WTC11 (cell line): ENCODE measurements at regions of chr19 and their contacts with region 1.

Region 1: GRCh38 chr19:4172861-4173473 is 9.4 kb downstream of the SIRT6 start:
- DNase-seq: peak; percentile 89
- ATAC-seq: peak; percentile 93
- H3K4me3 Mint-ChIP-seq: peak overlapping the region; percentile 34; the same call in 1 of the 2 replicates
- H3K27ac Mint-ChIP-seq: no peak overlapping the region
- H3K4me1 Mint-ChIP-seq: no peaks in the 10 kb centered on the region
- H3K27me3 Mint-ChIP-seq: peaks cover 24% of the 10 kb centered on the region
- CTCF ChIP-seq: no peak

Region 2: GRCh38 chr19:4197625-4198466 is 24.9 kb after region 1 on chr19:
- CTCF ChIA-PET with region 1: interaction called, 19 read pairs
- POLR2A ChIA-PET with region 1: no interaction called
- DNase-seq: peak; percentile 77
- ATAC-seq: peak; percentile 72
- H3K4me3 Mint-ChIP-seq: peak overlapping the region; percentile 70
- H3K27ac Mint-ChIP-seq: no peak overlapping the region; the same call in 1 of the 2 replicates
- H3K4me1 Mint-ChIP-seq: peaks cover 23% of the 10 kb centered on the region
- H3K27me3 Mint-ChIP-seq: peaks cover 53% of the 10 kb centered on the region
- CTCF ChIP-seq: no peak

Region 3: GRCh38 chr19:4208385-4209094 is 35.6 kb after region 1 on chr19:
- CTCF ChIA-PET with region 1: interaction called, 12 read pairs
- POLR2A ChIA-PET with region 1: no interaction called
- DNase-seq: no peak
- ATAC-seq: peak; percentile 57
- H3K4me3 Mint-ChIP-seq: no peak overlapping the region
- H3K27ac Mint-ChIP-seq: peak overlapping the region; percentile 78
- H3K4me1 Mint-ChIP-seq: peaks cover 6% of the 10 kb centered on the region; the same call in 1 of the 2 replicates
- H3K27me3 Mint-ChIP-seq: no peaks in the 10 kb centered on the region
- CTCF ChIP-seq: no peak